ENCODE measurements at regions of chr1 and their contacts with region 1.

Region 1: GRCh38 chr1:27725374-27726173 is at the start of gene FAM76A:
- DNase-seq: peak; percentile 99 to 100 (median 100)

Region 2: GRCh38 chr1:27568300-27569087 is 157.1 kb before region 1 on chr1:
- intact Hi-C with region 1: no loop called
- DNase-seq: peak in 41 of 42 donors; percentile 55 to 91 (median 76)

Region 3: GRCh38 chr1:27668808-27669723 is 56.5 kb before region 1 on chr1:
- intact Hi-C with region 1: loop called (anchors 2 kb)
- DNase-seq: peak; percentile 57 to 91 (median 84)

Region 4: DNA sequence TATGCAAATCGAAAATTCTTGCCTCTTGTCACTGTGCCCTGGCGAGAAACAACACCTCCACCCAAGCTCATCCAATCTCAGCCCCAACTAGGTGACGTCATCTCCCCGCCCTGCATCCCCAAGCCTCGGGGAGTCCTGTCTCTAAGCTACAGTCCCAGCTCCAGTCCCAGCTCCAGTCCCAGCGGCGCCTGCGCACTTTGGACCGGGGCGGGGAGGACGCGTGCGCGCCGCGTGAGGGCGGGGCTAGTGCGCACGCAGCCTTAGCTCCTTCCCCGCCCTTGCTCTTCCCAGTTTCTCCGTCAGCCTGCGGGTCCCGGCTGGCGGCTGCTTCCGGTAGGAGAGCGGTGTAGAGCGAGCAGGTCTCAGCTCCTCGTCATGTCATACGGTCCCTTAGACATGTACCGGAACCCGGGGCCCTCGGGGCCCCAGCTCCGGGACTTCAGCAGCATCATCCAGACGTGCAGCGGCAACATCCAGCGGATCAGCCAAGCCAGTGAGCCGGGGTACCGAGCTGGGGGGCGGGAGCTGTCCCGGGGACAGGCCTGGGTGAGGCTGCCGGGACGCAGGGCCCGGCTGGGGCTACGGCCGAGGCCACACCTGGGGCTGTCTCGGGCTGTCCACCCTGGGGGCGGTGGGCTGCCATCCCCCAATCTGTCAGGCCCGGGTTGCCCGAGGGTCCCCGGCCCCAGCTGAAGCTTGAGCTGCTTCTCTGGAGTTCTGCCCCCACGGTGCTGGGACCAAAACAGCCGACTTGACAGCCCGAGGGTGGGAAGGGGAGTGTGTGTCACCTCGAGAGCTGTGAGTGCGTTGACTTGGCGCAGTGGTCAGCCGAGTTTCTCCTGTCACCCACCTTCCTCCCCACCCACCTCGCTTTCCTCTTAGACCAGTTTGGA is 47.6 kb after region 1 on chr1 and contains the start of gene STX12:
- intact Hi-C with region 1: loop called (anchors 5 kb)
- DNase-seq: peak; percentile 96 to 99 (median 98)

Region 5: GRCh38 chr1:27830621-27831424 is 105.2 kb after region 1 on chr1 and contains the start of gene PPP1R8:
- intact Hi-C with region 1: loop called (anchors 10 kb)
- DNase-seq: peak; percentile 88 to 98 (median 95)

Region 6: GRCh38 chr1:28551381-28551780 is 825.8 kb after region 1 on chr1:
- intact Hi-C with region 1: no loop called
- DNase-seq: no peak